Ovary (tissue), 10 donors: ENCODE measurements at regions of chr17 and their contacts with region 1.

Region 1: GRCh38 chr17:55641676-55642081 is 81.0 kb downstream of the TMEM100 start:
- DNase-seq: peak; percentile 82 to 91 (median 87)
- H3K4me3 ChIP-seq: no peak overlapping the region
- H3K27ac ChIP-seq: peak overlapping the region in 1 of 2 donors; percentile 27
- H3K4me1 ChIP-seq: no peaks in the 10 kb centered on the region
- H3K27me3 ChIP-seq: no peaks in the 10 kb centered on the region
- CTCF ChIP-seq: peak; percentile 35 to 67 (median 66)
- EP300 ChIP-seq: no peak
- POLR2A ChIP-seq: no peak

Region 2: DNA sequence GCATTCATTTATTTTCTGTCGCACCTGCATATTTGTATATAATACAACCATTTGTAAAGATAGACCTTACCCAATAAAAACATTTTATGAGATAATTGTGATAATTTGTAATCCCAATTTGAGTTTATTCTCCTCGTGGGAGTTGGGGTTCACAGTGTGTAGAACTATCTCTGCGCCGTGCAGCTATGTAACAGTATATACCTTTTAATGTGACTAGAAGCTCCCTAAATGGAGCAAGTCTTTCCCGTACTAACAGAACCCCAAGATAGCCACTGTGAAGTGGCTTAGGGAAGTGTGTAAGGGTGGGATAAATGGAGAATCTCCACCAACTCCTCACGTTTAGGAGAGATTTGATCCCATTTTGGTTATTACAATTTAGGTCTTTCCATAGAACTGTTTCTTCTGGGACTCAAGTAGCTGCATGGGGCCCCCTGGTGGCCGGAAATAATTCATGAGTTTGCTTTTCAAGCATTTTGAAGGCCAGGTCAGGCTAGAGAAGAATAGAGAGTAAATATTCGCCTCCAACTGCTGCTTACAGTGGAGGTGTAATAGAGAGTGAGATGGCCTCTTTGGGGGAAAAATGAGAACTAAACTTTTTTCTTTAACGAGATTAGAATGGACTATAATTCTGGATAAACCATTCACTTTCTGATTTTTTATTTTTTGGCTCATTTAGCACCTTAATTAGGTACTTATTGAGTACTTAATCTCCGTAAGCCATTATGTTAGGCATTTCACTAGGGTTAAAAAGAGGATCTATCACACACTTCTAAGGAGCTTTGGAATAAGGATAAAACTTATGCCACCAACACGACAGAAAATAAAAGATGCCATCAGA is 76.4 kb after region 1 on chr17:
- intact Hi-C with region 1: loop called in 3 of 4 experiments (anchors 10 kb)
- DNase-seq: peak; percentile 74 to 89 (median 83)
- H3K4me3 ChIP-seq: no peak overlapping the region
- H3K27ac ChIP-seq: no peak overlapping the region
- H3K4me1 ChIP-seq: no peaks in the 10 kb centered on the region
- H3K27me3 ChIP-seq: no peaks in the 10 kb centered on the region
- CTCF ChIP-seq: peak; percentile 66 to 74 (median 69)
- EP300 ChIP-seq: no peak
- POLR2A ChIP-seq: no peak

Region 3: GRCh38 chr17:55770148-55770870 is 128.6 kb after region 1 on chr17:
- intact Hi-C with region 1: loop called in 2 of 4 experiments (anchors 10 kb)
- DNase-seq: no peak
- H3K4me3 ChIP-seq: no peak overlapping the region
- H3K27ac ChIP-seq: no peak overlapping the region
- H3K4me1 ChIP-seq: no peaks in the 10 kb centered on the region
- H3K27me3 ChIP-seq: no peaks in the 10 kb centered on the region
- CTCF ChIP-seq: peak in 2 of 3 donors; percentile 69 to 75
- EP300 ChIP-seq: no peak
- POLR2A ChIP-seq: no peak